ENCODE measurements at regions of chr1 and their contacts with region 1.

Region 1: DNA sequence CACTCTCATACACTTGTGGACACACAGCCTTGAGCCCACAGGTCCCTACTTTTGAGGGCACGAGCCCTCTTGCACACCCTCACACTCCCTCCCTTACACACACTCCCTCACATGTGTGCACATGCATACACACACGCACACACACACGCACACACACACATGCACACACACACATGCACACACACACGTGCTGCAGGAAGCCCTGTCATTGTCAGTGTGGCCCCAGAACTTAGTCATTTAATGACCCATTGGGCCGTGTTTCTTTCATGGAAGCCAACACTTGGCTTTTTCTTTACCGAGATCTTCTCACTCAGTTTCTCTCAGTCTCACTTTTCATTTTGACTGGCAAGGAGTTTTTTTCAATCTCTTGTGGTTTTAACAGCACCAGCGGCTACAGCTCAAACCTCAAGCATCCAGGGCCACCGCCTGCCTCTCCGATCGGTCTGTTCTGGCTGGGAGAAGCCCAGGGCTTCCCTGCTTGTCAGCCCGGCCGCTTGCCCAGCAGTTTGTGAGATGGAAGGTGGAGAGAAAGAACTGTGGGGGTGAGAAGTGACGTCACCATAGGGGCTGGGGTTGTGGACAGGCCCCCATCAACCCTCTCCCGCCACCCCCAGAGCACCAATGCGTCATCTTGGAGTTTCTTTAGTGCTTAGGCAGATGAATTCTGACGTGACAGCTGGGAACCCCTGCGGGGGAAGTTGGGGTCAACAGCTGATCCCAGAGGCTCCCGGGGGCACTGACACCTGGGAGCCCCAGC is 15.8 kb upstream of the TNFRSF8 start:
- DNase-seq: peak; percentile 92
- H3K4me3 Mint-ChIP-seq: no peak overlapping the region
- H3K27ac Mint-ChIP-seq: no peak overlapping the region
- H3K4me1 Mint-ChIP-seq: peaks cover 24% of the 10 kb centered on the region
- H3K27me3 Mint-ChIP-seq: peaks cover 3% of the 10 kb centered on the region

Region 2: DNA sequence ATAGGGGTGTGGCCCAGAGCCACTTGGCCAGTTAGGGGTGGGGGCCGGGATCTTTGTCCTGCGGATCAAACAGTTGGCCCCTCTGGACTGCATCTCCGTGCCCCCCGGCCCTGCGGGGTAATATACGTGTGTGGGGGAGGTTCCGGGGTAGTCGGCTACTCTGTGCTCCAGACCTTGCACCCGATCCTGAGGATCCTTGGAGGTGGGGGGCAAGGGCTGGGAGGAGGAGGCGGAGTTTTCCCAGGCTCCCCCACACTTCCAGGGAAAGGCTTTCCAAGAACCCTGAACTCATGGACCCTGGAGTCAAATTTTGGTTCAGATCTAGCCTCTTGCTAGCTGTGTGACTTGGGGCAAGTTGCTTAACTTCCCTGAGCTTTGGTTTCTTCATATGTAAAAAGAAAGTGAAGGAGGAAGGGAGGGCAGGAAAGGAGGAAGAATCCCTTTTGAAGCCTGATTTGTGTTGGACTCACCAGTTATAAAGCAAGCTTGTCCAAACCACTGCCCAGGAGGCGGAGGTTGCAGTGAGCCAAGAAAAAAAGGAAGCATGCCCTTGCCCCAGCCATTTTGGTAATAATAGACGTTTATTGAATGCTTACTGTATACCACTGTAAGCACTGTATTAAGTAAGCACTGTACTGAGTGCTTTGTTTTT is 27.3 kb before region 1 on chr1:
- intact Hi-C with region 1: loop called (anchors 2 kb)
- DNase-seq: no peak
- H3K4me3 Mint-ChIP-seq: peak overlapping the region; percentile 91
- H3K27ac Mint-ChIP-seq: peak overlapping the region; percentile 72
- H3K4me1 Mint-ChIP-seq: peaks cover 16% of the 10 kb centered on the region
- H3K27me3 Mint-ChIP-seq: peaks cover 2% of the 10 kb centered on the region

Region 3: GRCh38 chr1:12057382-12057781 is 10.1 kb after region 1 on chr1:
- intact Hi-C with region 1: loop called (anchors 1 kb)
- DNase-seq: peak; percentile 72
- H3K4me3 Mint-ChIP-seq: peak overlapping the region; percentile 44
- H3K27ac Mint-ChIP-seq: peak overlapping the region; percentile 17
- H3K4me1 Mint-ChIP-seq: peaks cover 61% of the 10 kb centered on the region
- H3K27me3 Mint-ChIP-seq: no peaks in the 10 kb centered on the region

Region 4: DNA sequence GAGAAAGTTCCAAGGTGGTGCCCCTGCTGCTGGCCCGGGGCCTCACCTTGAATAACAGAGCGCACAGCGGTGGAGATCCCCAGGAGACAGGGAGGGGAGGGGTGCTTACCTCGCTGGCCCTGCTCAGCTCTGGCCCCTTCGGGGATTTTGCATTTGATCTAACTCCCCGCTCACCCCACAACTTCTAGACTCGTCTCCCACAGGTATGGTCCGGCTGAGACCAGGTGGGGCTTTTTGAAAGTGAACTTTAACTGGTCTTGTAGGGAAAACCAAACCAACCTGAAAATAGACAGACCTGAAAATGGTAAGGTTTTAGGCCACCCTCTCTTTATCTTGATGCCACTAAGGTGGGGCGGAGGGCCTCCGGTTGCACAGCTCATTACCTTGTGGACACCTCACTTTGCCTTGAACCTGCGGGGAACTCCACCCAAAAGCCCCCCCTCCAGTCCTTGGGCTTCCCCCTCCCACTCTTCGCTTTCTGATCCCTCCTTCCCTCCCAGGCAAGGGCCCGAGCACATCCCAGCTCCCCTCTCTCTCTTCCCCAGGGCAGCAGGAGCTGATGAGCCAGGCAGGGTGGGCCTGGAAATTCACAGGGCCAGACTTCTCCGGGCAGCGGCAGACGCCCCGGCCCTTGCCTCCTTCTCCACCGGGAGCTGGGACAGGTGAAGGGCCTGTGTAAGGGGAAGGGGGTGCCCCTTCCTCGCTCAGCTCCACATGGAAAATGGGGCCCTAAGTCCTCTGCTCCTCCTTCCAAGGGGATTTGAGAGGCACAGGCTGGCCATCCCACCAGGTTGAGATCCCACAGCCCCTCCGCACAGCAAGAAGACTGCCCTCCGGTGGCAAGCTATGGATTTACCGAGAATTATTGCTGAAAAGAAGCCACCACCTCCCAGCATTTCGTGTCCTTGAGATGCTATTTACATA is 31.9 kb after region 1 on chr1:
- intact Hi-C with region 1: loop called (anchors 1 kb)
- DNase-seq: peak; percentile 81
- H3K4me3 Mint-ChIP-seq: no peak overlapping the region
- H3K27ac Mint-ChIP-seq: peak overlapping the region; percentile 61
- H3K4me1 Mint-ChIP-seq: peaks cover 39% of the 10 kb centered on the region
- H3K27me3 Mint-ChIP-seq: no peaks in the 10 kb centered on the region

Region 5: DNA sequence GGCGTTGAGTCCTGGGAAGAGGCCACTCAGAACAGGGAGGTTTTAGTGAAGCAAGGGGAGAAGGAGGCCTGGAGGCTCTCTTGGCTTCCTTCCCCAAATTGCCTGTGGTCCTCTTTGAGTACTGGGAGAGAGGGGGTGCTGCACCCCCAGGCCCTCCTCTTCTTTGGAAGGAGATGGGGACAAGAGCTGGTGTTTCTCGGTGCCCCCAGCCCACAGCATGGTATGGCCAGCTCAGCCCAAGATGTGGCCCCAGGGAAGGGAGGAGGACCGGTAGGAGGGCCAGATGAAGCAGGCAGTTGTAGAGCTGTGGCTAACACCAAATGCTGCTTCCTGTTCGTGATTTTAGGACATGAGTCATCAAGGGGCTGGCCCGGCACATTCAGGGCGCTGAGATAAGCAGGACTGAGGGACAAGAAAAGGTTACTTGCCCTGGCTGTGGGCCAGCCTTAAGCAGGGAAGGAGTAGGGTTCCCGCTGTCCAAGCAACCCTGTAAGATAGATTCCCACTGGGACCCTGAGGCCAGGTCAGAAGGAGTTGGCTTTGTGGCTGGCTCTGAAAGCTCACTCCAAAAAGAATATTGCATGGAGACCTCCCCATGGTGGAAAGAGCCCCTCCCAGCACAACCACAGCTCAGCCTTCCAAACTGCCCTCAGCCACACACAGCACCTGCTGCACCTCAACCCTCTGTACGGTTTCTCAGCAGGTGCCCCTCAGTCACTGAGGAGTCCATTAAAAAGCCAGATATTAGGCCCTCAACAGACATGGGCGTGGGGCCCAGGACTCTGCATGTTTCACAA is 114.6 kb after region 1 on chr1:
- intact Hi-C with region 1: loop called (anchors 5 kb)
- DNase-seq: peak; percentile 93
- H3K4me3 Mint-ChIP-seq: peak overlapping the region; percentile 76
- H3K27ac Mint-ChIP-seq: peak overlapping the region; percentile 95
- H3K4me1 Mint-ChIP-seq: peaks cover 77% of the 10 kb centered on the region
- H3K27me3 Mint-ChIP-seq: no peaks in the 10 kb centered on the region

Measured in activated CD4-positive, alpha-beta T cell treated with anti-CD3 and anti-CD28 coated beads, Interleukin-2, amount 10 ng/mL, durations not matched to agents 24 days and 14 days (primary cell).